Pancreas (tissue), 10 donors: ENCODE measurements at regions of chr11 and their contacts with region 1.

Region 1: DNA sequence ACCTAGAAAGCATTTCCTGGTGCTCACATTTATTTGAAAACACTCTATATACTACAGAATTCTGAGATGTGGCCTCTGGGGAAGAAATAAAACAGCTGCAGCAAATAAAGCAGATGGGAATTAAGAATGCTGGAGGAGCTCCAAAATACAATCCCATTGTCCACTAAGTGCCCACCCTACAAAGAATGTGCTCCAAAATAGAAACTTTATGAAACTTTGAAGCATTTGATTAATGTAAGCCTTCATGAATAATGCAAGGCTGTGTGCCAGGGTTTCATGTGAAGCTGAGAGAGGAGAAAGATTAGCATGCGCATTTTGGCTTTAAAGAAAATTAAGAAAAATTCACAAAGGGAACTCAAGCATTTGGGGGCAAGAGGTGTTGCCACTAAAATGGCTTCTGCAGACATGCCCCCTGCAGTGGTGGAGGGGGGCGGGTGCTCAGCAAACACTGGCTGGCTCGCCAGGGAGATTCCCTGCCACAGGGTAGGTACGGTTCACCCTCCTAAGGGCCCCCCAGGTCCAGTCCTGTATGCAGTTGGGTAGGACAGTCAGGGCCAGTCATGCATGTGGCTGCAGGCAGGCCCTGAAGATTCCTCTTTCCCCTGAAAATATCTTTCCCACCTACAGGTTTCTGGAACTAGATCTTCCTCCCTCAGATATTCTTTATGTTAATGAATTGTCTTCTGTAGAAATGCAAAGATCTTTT is 46.6 kb upstream of the RCN1 start:
- DNase-seq: no peak
- ATAC-seq: no peak
- H3K4me3 ChIP-seq: no peak overlapping the region
- H3K27ac ChIP-seq: no peak overlapping the region
- H3K4me1 ChIP-seq: no peaks in the 10 kb centered on the region
- H3K27me3 ChIP-seq: no peaks in the 10 kb centered on the region
- CTCF ChIP-seq: no peak

Region 2: DNA sequence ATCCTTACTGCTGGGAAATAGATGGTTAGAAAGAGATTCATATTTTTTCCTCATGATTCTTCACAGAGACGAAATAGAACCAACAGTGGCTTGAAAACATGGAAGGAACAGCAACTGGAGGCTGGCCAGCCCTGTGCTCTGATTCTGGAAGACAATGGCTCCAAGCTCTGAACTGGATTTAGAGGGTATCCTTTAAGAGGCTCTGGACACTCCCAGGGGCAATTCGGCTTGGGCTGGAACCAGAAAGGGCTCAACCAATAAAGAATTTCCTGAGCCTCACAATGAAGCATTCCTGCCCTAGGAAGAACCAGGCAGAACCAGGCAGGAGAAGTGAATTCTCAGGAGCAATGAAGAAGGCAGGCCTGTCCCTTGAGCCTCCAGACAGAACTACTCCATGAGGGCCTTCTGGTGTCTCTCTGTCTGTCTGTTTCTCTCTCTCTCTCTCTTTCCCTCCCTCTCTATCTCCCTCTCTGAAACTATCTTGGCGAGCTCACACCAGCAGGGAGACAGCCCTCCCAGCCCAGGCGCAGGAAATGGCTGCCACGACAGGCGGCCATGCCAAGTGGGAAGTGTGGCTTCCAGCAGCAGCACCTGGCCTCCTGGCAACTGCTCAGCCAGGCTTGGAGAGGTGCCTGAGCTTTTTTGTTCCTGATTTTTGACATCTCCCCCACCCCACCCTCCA is 139.9 kb after region 1 on chr11:
- intact Hi-C with region 1: loop called in 1 of 3 experiments (anchors 10 kb)
- DNase-seq: no peak
- ATAC-seq: no peak
- H3K4me3 ChIP-seq: no peak overlapping the region
- H3K27ac ChIP-seq: no peak overlapping the region
- H3K4me1 ChIP-seq: no peaks in the 10 kb centered on the region
- H3K27me3 ChIP-seq: no peaks in the 10 kb centered on the region
- CTCF ChIP-seq: no peak